ENCODE measurements at regions of chr5 and their contacts with region 1.

Region 1: DNA sequence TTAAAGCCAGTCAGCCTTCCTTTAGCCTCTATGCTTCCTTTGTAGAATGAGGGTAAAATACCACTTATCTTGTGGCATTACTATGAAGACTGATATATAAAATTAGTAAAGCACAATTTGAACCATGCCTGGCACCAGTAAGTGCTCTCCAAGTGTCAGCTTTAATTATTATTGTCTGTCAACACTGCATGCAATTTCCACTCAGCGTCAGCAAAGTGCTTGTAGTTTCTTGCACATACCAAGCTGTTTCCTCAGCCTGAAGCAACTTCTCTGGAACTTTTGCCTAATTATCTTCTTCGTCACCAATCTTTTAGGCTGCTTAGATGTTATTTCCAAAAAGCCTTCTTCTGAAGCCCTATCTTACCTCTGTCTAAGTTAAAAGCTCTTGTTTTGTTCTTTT is 177.3 kb downstream of the CDC42SE2 start:
- DNase-seq: no peak
- ATAC-seq: no peak
- H3K4me3 ChIP-seq: no peak overlapping the region
- H3K4me3 Mint-ChIP-seq: peak overlapping the region in 1 of 10 donors; percentile 30
- H3K27ac ChIP-seq: no peak overlapping the region
- H3K27ac Mint-ChIP-seq: peak overlapping the region in 7 of 9 donors; percentile 39 to 80 (median 60)
- H3K4me1 ChIP-seq: no peaks in the 10 kb centered on the region
- H3K4me1 Mint-ChIP-seq: peaks cover 4 to 52% (median 35%) of the 10 kb centered on the region in 7 donors
- H3K27me3 ChIP-seq: no peaks in the 10 kb centered on the region
- H3K27me3 Mint-ChIP-seq: no peaks in the 10 kb centered on the region

Region 2: GRCh38 chr5:131475541-131475941 is 34.4 kb after region 1 on chr5:
- CTCF ChIA-PET with region 1: no interaction called
- POLR2A ChIA-PET with region 1: interaction called, 3 read pairs
- intact Hi-C with region 1: loop called in 1 of 2 experiments (anchors 5 kb)
- DNase-seq: no peak
- ATAC-seq: no peak
- H3K4me3 ChIP-seq: no peak overlapping the region
- H3K4me3 Mint-ChIP-seq: peak overlapping the region in 1 of 10 donors; percentile 5
- H3K27ac ChIP-seq: no peak overlapping the region
- H3K27ac Mint-ChIP-seq: peak overlapping the region in 6 of 9 donors; percentile 14 to 62 (median 28)
- H3K4me1 ChIP-seq: peaks cover 6 to 8% of the 10 kb centered on the region in 2 donors
- H3K4me1 Mint-ChIP-seq: peaks cover 8 to 76% (median 66%) of the 10 kb centered on the region in 7 donors
- H3K27me3 ChIP-seq: no peaks in the 10 kb centered on the region
- H3K27me3 Mint-ChIP-seq: no peaks in the 10 kb centered on the region

Measured in naive thymus-derived CD4-positive, alpha-beta T cell (primary cell).